ENCODE measurements at regions of chr1 and their contacts with region 1.

Region 1: DNA sequence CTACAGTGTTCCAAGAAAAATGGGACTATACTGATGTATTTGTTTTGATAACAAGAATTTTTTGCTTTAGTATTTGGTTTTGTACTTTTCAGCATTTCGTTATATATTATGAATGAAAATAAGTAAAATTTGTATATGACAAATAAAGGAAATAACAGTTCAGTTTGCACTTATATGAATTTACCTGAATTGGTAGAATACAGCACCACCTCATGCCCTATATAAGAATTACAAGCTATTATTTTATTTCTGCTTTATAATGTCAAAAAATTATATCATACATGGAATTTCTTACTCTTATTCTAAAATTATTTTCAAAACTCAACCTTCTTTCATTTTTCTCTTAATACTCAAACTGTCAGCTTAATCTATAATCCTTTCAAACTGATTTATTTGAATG is 14.6 kb downstream of the EFCAB7 start:
- DNase-seq: no peak
- H3K4me3 ChIP-seq: no peak overlapping the region
- CTCF ChIP-seq: peak; percentile 16

Region 2: GRCh38 chr1:62841587-62842169 is 696.3 kb before region 1 on chr1:
- CTCF ChIA-PET with region 1: interaction called, 16 read pairs
- POLR2A ChIA-PET with region 1: no interaction called
- DNase-seq: peak; percentile 14
- H3K4me3 ChIP-seq: no peak overlapping the region
- CTCF ChIP-seq: peak; percentile 39

Region 3: DNA sequence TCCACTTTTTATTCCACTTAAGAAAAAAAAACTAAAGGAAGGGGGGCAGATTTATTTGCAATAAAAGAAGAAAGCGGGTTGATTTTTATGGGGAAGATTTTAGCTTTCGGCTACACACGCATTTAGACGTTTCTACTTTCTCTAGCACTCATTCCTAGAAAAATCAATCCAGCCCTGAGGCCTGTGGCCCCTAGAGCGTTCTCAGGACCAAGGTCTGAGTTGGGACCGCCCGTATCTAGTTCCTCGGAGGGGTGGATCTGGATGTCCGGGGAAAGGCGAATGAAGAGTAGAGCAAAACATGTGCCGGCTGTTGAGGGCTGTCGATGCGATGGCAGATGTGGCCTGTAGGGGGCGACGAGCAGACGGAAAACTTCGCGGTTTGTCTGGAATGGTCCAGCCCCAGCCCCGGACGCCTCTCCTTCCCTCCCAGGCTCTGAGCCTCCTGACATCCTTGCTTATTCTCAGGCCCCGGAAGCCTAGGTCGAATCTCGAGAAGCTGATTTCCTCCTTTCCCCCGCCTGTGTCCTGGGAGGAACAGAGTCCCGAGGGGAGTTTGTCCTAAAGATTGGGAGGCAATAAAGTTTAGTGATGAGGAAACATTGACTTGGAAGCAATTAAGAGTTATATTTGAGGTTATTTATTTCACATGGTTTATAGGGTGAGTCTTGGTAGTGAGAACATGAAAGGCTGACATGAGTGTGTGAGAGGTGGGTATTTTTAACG is 210.4 kb before region 1 on chr1:
- CTCF ChIA-PET with region 1: interaction called, 21 read pairs
- POLR2A ChIA-PET with region 1: no interaction called
- DNase-seq: no peak
- H3K4me3 ChIP-seq: no peak overlapping the region
- CTCF ChIP-seq: peak; percentile 85

Region 4: GRCh38 chr1:63522891-63523728 is 14.8 kb before region 1 on chr1 and contains the starts of genes EFCAB7 and ITGB3BP:
- CTCF ChIA-PET with region 1: interaction called, 17 read pairs
- POLR2A ChIA-PET with region 1: no interaction called
- DNase-seq: peak; percentile 69
- H3K4me3 ChIP-seq: peak within 1 kb of the TSS; percentile 66
- CTCF ChIP-seq: no peak

Region 5: GRCh38 chr1:63557365-63557987 is 19.5 kb after region 1 on chr1:
- CTCF ChIA-PET with region 1: interaction called, 25 read pairs
- POLR2A ChIA-PET with region 1: no interaction called
- DNase-seq: no peak
- H3K4me3 ChIP-seq: no peak overlapping the region
- CTCF ChIP-seq: peak; percentile 50

Region 6: DNA sequence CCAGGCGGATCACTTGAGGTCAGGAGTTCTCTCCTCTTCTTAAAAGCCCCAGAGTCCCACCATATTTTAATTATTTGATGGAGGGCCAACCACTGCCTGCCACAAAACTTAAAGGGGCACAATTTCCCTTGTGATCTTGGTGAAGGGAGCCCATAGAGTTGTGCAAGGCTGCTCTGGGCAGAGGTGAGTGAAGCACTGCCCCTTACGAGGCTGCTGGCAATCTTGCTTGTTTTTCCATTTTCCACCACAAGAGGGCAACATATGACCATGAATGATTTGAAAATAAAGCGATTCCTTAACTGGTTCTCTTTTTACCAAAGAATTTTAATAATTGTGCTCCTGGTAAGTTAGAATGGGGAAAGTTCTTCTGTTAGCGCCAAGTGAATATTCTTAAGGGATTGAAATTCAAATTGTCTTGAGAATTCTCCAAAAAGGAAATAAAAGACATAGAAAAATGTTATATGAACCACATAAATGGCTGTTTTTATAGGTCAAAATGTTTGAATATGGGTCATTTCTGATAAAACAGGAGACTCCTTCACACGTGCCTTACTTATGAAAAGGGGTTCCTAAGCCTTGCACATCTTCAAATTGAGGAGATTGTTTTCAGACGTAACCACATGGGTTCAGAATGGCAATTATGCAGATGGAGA is 78.0 kb after region 1 on chr1:
- CTCF ChIA-PET with region 1: no interaction called
- POLR2A ChIA-PET with region 1: no interaction called
- DNase-seq: no peak
- H3K4me3 ChIP-seq: no peak overlapping the region
- CTCF ChIP-seq: peak; percentile 40

Region 7: GRCh38 chr1:64212031-64212430 is 674.1 kb after region 1 on chr1:
- CTCF ChIA-PET with region 1: no interaction called
- POLR2A ChIA-PET with region 1: no interaction called
- DNase-seq: peak; percentile 54
- H3K4me3 ChIP-seq: no peak overlapping the region
- CTCF ChIP-seq: no peak

Measured in AG04449 (cell line).